ENCODE measurements at regions of chr17 and their contacts with region 1.

Region 1: GRCh38 chr17:76623271-76624146 is 20.0 kb downstream of the ST6GALNAC1 start:
- DNase-seq: peak; percentile 83
- ATAC-seq: peak; percentile 98
- H3K4me3 Mint-ChIP-seq: no peak overlapping the region
- H3K27ac Mint-ChIP-seq: no peak overlapping the region
- H3K4me1 Mint-ChIP-seq: peaks cover 7% of the 10 kb centered on the region
- H3K27me3 Mint-ChIP-seq: peaks cover 1% of the 10 kb centered on the region
- CTCF ChIP-seq: peak; percentile 98

Region 2: GRCh38 chr17:76567634-76568432 is 55.7 kb before region 1 on chr17:
- CTCF ChIA-PET with region 1: interaction called, 12 read pairs
- POLR2A ChIA-PET with region 1: interaction called, 5 read pairs
- intact Hi-C with region 1: no loop called
- DNase-seq: no peak
- ATAC-seq: no peak
- H3K4me3 Mint-ChIP-seq: no peak overlapping the region
- H3K27ac Mint-ChIP-seq: peak overlapping the region; percentile 30
- H3K4me1 Mint-ChIP-seq: peaks cover 41% of the 10 kb centered on the region
- H3K27me3 Mint-ChIP-seq: no peaks in the 10 kb centered on the region
- CTCF ChIP-seq: no peak

Region 3: DNA sequence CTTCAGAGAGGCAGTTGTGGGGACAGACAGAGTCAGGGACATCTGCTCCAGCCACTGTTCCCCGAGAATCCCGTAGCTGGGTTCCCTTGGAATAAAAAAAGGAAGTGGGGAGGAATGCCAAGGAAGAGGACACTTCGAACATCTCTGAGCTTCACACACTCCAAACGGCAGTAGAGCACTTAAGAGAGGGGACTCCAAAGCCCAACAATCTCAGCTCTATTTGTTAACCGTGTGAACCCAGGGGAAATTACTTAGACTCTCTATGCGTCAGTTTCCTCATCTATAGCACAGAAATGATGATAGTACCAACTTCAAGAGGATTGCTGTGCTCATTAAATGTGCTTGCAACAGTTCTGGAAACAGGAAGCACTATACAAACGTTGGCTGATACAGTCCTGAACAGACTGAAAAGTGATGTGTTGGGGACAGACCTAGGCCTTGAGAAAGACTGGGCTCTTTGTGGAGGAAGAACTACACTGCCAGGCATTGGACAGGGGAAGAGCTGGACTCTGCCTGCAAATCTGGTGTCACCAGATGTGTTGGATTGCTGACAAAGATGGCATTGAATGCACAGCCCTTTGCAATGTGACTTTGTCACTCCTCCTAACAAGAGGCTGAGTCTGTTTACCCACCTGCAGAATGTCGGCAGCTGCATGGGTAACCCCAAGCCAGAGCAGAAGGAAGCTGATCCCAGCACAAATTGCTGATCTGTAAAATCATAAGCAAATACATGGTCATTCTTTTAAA is 25.6 kb before region 1 on chr17:
- CTCF ChIA-PET with region 1: interaction called, 16 read pairs
- POLR2A ChIA-PET with region 1: no interaction called
- intact Hi-C with region 1: no loop called
- DNase-seq: no peak
- ATAC-seq: no peak
- H3K4me3 Mint-ChIP-seq: no peak overlapping the region
- H3K27ac Mint-ChIP-seq: no peak overlapping the region
- H3K4me1 Mint-ChIP-seq: peaks cover 10% of the 10 kb centered on the region
- H3K27me3 Mint-ChIP-seq: peaks cover 2% of the 10 kb centered on the region
- CTCF ChIP-seq: no peak

Region 4: GRCh38 chr17:76635659-76636360 is 12.3 kb after region 1 on chr17:
- CTCF ChIA-PET with region 1: interaction called, 16 read pairs
- POLR2A ChIA-PET with region 1: no interaction called
- intact Hi-C with region 1: no loop called
- DNase-seq: no peak
- ATAC-seq: no peak
- H3K4me3 Mint-ChIP-seq: no peak overlapping the region
- H3K27ac Mint-ChIP-seq: no peak overlapping the region
- H3K4me1 Mint-ChIP-seq: no peaks in the 10 kb centered on the region
- H3K27me3 Mint-ChIP-seq: no peaks in the 10 kb centered on the region
- CTCF ChIP-seq: no peak

Region 5: DNA sequence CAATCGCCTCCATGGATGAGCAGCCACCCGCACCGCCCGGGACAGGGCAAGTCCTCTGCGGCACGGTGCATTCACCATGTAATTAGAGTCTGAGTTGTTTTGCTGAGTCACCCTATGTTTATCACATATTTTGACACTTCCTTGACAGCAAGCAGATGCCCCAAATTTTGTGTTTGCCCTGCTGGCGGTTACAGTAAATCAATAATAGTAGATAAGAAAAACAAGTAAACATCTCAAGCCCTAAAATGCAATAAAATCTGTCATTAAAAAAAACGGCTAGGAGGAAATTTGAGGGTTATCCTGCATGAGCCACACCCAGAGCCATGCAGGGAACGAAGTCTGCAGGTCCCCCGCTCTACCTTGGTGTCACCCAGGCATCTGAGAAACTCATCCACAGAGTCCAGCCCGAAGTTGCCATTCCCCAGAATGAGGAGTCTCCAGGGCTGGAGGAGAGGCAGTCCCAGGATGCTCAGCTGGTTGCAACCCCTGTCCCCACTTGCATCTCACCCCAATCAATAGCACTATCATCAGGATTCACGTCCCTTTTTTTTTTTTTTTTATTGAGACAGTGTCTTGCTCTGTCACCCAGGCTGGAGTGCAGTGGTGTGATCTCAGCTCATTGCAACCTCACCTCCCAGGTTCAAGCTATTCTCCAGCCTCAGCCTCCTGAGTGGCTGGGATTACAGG is 36.6 kb after region 1 on chr17:
- CTCF ChIA-PET with region 1: interaction called, 11 read pairs
- POLR2A ChIA-PET with region 1: no interaction called
- intact Hi-C with region 1: no loop called
- DNase-seq: no peak
- ATAC-seq: peak; percentile 51
- H3K4me3 Mint-ChIP-seq: no peak overlapping the region
- H3K27ac Mint-ChIP-seq: peak overlapping the region; percentile 70
- H3K4me1 Mint-ChIP-seq: peaks cover 22% of the 10 kb centered on the region
- H3K27me3 Mint-ChIP-seq: no peaks in the 10 kb centered on the region
- CTCF ChIP-seq: no peak

Region 6: GRCh38 chr17:76704805-76705204 is 81.3 kb after region 1 on chr17:
- CTCF ChIA-PET with region 1: interaction called, 10 read pairs
- POLR2A ChIA-PET with region 1: no interaction called
- intact Hi-C with region 1: no loop called
- DNase-seq: no peak
- ATAC-seq: no peak
- H3K4me3 Mint-ChIP-seq: no peak overlapping the region
- H3K27ac Mint-ChIP-seq: no peak overlapping the region
- H3K4me1 Mint-ChIP-seq: peaks cover 4% of the 10 kb centered on the region
- H3K27me3 Mint-ChIP-seq: no peaks in the 10 kb centered on the region
- CTCF ChIP-seq: no peak